Common myeloid progenitor, CD34-positive (primary cell): ENCODE measurements at regions of chr4 and their contacts with region 1.

Region 1: GRCh38 chr4:143513306-143514168 is at the start of gene SMARCA5:
- DNase-seq: peak; percentile 99
- H3K4me3 ChIP-seq: peak within 1 kb of the TSS; percentile 76 to 100 (median 99)
- H3K27ac ChIP-seq: peak within 1 kb of the TSS; percentile 96 to 98
- H3K4me1 ChIP-seq: peaks cover 13 to 28% (median 19%) of the 10 kb centered on the region in 4 experiments
- H3K27me3 ChIP-seq: no peaks in the 10 kb centered on the region

Region 2: DNA sequence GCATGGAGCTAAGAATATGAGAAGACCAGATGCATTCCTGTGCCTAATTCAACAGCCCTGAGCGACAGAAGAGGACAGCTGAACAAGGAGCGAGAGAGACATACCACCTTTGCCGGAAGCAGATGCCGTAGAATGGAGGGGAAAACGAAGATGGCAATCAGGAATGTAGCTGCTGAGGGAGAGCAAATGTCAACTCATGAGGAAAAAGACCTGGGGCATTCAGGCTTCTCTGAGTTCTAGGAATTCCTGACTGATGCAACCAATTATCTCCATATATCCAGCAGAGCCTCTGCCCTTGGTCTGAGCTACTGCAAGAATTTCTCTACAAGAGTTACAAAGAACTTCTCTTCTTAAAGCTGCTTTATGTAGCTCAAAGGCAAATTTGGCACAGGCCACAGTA is 627.0 kb before region 1 on chr4:
- CTCF ChIA-PET with region 1: no interaction called
- POLR2A ChIA-PET with region 1: no interaction called
- DNase-seq: no peak
- H3K4me3 ChIP-seq: no peak overlapping the region
- H3K27ac ChIP-seq: no peak overlapping the region
- H3K4me1 ChIP-seq: no peaks in the 10 kb centered on the region
- H3K27me3 ChIP-seq: no peaks in the 10 kb centered on the region

Region 3: GRCh38 chr4:143502231-143502630 is 11.3 kb before region 1 on chr4:
- CTCF ChIA-PET with region 1: interaction called, 9 read pairs
- POLR2A ChIA-PET with region 1: interaction called, 10 read pairs
- DNase-seq: peak in 2 of 3 donors; percentile 57 to 63
- H3K4me3 ChIP-seq: no peak overlapping the region
- H3K27ac ChIP-seq: no peak overlapping the region
- H3K4me1 ChIP-seq: peaks cover 0 to 7% (median 5%) of the 10 kb centered on the region in 4 experiments
- H3K27me3 ChIP-seq: no peaks in the 10 kb centered on the region

Region 4: GRCh38 chr4:143587703-143588102 is 74.2 kb after region 1 on chr4:
- CTCF ChIA-PET with region 1: no interaction called
- POLR2A ChIA-PET with region 1: no interaction called
- DNase-seq: peak; percentile 41 to 56 (median 46)
- H3K4me3 ChIP-seq: no peak overlapping the region
- H3K27ac ChIP-seq: no peak overlapping the region
- H3K4me1 ChIP-seq: no peaks in the 10 kb centered on the region
- H3K27me3 ChIP-seq: no peaks in the 10 kb centered on the region